ENCODE measurements at regions of chr3 and their contacts with region 1.

Region 1: DNA sequence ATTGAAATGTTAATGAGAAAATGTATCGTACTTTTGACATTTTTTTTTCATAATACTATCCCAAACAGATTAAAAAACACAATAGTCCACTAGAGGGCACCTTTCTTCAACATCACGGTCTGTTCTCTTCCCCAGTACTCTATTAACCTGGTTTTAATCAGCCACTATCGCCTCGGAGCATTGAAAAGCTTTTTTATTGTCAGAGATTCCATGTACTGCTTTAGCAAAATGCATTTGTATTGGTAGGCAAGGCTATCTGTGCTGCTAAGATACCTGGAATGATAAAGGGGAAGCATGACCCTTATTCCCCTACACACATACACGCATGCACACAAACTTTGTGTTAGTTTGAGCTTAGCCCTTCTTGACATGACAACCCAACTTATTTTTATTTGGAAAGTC is 160.1 kb upstream of the IL12A start:
- DNase-seq: no peak
- ATAC-seq: peak; percentile 59

Region 2: GRCh38 chr3:159685801-159686200 is 142.7 kb before region 1 on chr3:
- intact Hi-C with region 1: no loop called
- DNase-seq: no peak
- ATAC-seq: no peak

Region 3: GRCh38 chr3:159884661-159885402 is 56.3 kb after region 1 on chr3:
- intact Hi-C with region 1: loop called (anchors 5 kb)
- DNase-seq: no peak
- ATAC-seq: peak; percentile 8